A549 (cell line): ENCODE measurements at regions of chr3 and their contacts with region 1.

Region 1: DNA sequence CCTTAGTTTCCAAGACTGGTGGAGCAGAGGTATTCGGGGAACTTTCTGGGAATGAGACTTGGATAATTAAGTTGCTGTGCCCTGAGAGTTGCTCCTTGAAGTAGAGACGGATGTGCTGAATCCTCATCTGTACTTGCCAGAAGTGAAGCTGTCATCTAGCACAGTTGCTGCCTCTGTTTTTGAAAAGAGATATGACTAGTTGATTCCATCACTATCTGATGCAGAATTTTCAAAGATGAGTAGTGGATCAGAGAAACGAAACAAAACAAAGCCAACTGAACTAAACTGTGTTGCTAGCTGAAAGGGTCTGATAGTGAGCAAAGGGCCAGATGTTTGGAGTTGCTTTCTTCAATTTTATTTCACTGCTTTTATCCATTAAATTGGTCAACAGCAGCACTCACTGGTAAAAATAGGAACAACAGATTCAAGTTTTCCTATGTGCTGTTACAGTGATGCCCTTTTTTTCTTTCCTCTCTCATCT is 52.7 kb downstream of the MITF start:
- DNase-seq: peak in 1 of 2 experiments; percentile 46
- ATAC-seq: peak; percentile 82 to 85; a peak in 5 of 6 replicates
- H3K4me3 ChIP-seq: no peak overlapping the region
- H3K27ac ChIP-seq: peak overlapping the region in 1 of 2 experiments; percentile 23; a peak in 4 of 6 replicates
- H3K4me1 ChIP-seq: peaks cover 31% of the 10 kb centered on the region
- CTCF ChIP-seq: peak; percentile 84
- EP300 ChIP-seq: no peak
- POLR2A ChIP-seq: no peak
- RAD21 ChIP-seq: peak; percentile 92 to 93

Region 2: DNA sequence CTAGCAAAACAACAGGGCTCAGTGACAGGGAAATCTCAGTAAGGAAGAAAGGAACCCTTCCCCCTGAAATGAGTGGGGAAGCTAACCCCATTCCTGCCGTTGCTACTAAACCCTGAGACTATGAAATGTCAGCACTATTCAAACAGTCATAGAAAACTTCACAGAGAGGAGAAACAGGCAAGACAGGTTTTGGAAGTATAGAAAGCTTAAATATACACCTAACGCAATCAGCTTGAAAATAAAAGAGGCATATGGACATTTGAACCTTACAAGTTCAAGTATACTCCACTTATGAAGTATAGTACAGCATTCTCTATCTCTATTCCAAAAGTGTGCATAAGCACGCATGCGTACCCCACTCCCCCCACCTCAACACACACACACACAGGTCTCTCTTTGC is 388.5 kb before region 1 on chr3:
- CTCF ChIA-PET with region 1: no interaction called
- POLR2A ChIA-PET with region 1: no interaction called
- DNase-seq: no peak
- ATAC-seq: no peak
- H3K4me3 ChIP-seq: no peak overlapping the region
- H3K27ac ChIP-seq: no peak overlapping the region
- H3K4me1 ChIP-seq: no peaks in the 10 kb centered on the region
- CTCF ChIP-seq: no peak
- EP300 ChIP-seq: no peak
- POLR2A ChIP-seq: no peak
- RAD21 ChIP-seq: no peak

Region 3: GRCh38 chr3:69579306-69580041 is 212.5 kb before region 1 on chr3:
- CTCF ChIA-PET with region 1: no interaction called
- POLR2A ChIA-PET with region 1: no interaction called
- DNase-seq: no peak
- ATAC-seq: no peak
- H3K4me3 ChIP-seq: no peak overlapping the region
- H3K27ac ChIP-seq: no peak overlapping the region
- H3K4me1 ChIP-seq: no peaks in the 10 kb centered on the region
- CTCF ChIP-seq: no peak
- EP300 ChIP-seq: no peak
- POLR2A ChIP-seq: no peak
- RAD21 ChIP-seq: no peak

Region 4: DNA sequence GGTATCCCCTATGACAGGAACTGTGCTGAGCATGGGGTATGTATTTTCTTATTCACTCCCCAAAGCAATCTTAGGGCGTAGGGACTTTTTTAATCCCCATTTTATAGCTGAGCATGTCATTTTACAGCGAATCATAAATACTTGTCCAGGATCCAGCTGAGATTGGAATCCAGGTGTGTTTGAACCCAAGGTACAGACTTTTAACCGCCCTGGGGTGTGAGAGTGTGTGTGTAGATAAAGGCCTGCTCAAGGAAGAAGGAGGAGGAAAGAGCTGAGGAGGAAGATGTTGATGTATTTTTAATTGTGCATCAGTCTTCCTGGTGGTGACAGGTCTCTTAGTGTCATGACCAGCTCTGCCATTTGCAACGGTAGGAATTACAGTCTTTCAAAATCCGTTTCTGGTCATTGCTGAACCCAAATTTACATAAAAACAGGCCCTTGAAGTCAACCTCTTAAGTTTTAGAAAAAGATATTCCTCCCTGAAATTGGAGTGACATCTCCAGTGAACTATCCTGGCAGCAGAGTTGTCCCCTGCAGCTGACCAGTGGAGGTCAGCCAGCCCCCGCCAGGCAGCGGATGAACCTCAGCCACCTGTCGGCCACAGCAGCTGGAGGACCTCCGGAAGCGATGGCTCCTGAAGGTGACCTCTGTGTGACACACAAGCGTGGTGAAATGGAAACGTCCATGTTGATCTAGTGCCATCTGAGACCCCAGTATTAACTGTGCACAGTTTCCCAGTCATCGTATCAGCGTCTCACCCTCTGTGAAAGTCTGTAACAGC is 145.5 kb before region 1 on chr3:
- CTCF ChIA-PET with region 1: no interaction called
- POLR2A ChIA-PET with region 1: no interaction called
- DNase-seq: no peak
- ATAC-seq: no peak
- H3K4me3 ChIP-seq: no peak overlapping the region
- H3K27ac ChIP-seq: no peak overlapping the region
- H3K4me1 ChIP-seq: peaks cover 21% of the 10 kb centered on the region
- CTCF ChIP-seq: no peak
- EP300 ChIP-seq: no peak
- POLR2A ChIP-seq: no peak
- RAD21 ChIP-seq: no peak

Region 5: GRCh38 chr3:69682878-69683806 is 108.8 kb before region 1 on chr3:
- CTCF ChIA-PET with region 1: interaction called, 226 read pairs
- POLR2A ChIA-PET with region 1: no interaction called
- DNase-seq: peak in 1 of 2 experiments; percentile 75
- ATAC-seq: peak in 1 of 2 experiments; percentile 88; a peak in 3 of 6 replicates
- H3K4me3 ChIP-seq: no peak overlapping the region
- H3K27ac ChIP-seq: no peak overlapping the region; a peak in 1 of 6 replicates
- H3K4me1 ChIP-seq: peaks cover 15% of the 10 kb centered on the region
- CTCF ChIP-seq: no peak
- EP300 ChIP-seq: no peak
- POLR2A ChIP-seq: no peak
- RAD21 ChIP-seq: no peak

Region 6: GRCh38 chr3:69739204-69740102 is 52.5 kb before region 1 on chr3 and contains the start of gene MITF:
- CTCF ChIA-PET with region 1: interaction called, 24 read pairs
- POLR2A ChIA-PET with region 1: no interaction called
- DNase-seq: peak; percentile 84 to 89
- ATAC-seq: peak; percentile 97 to 99
- H3K4me3 ChIP-seq: peak within 1 kb of the TSS; percentile 85
- H3K27ac ChIP-seq: peak within 1 kb of the TSS; percentile 65 to 84
- H3K4me1 ChIP-seq: peaks cover 6% of the 10 kb centered on the region; the same call in 2 of the 3 replicates
- CTCF ChIP-seq: no peak
- EP300 ChIP-seq: no peak
- POLR2A ChIP-seq: peak; percentile 24
- RAD21 ChIP-seq: no peak
- polyA plus RNA-seq, gene MITF: 15.3 and 15.9 TPM in 2 replicates

Region 7: DNA sequence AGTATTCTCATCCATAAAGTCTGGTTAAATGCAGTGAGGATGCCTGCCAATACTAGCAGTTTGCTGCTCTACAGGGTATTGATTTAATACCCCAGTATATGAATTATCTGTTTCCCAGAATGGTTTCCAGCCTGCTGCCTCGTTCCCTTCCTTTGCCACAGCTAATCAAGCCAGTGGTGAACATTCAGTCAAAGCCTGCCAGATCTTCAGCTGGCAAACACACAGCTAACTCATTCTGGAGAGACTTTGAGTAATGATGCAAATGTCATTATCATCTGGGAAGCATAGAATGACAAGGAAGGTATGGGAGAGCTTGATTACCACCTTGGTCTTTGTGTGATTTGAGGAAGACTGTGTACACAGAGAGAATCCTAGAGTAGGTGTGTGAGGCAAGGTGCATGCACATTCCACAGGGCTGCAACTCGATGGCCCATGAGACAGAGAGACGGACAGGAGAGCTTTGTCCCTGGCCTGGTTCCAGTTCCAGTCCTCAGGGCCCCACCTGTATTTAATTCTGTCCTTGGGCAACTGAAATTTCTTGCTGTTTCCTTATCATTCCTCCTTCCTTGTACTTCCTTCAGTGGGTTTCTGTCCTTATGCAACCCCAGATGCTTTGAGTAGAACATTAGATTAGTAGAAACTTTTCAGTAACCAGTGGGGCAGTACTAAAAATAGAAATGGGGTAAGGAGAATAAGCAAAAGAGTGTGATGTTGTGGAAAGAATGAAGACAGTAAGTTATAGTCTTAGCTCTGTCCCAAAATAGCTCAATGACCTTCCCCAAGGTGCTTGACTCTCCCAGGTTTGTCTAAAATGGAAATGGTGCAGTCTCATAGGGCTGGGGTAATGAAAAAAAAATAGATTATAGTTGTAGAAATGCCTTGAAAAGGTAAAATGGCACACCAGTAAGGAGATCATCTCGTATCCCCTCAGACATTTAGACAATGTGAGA is 19.8 kb after region 1 on chr3:
- CTCF ChIA-PET with region 1: interaction called, 10 read pairs
- POLR2A ChIA-PET with region 1: no interaction called
- DNase-seq: no peak
- ATAC-seq: no peak
- H3K4me3 ChIP-seq: no peak overlapping the region
- H3K27ac ChIP-seq: no peak overlapping the region
- H3K4me1 ChIP-seq: no peaks in the 10 kb centered on the region
- CTCF ChIP-seq: no peak
- EP300 ChIP-seq: no peak
- POLR2A ChIP-seq: no peak
- RAD21 ChIP-seq: no peak

Region 8: GRCh38 chr3:69948246-69948862 is 156.4 kb after region 1 on chr3:
- CTCF ChIA-PET with region 1: interaction called, 15 read pairs
- POLR2A ChIA-PET with region 1: no interaction called
- DNase-seq: peak in 1 of 2 experiments; percentile 43
- ATAC-seq: no peak
- H3K4me3 ChIP-seq: no peak overlapping the region
- H3K27ac ChIP-seq: peak overlapping the region; percentile 19 to 49; a peak in 3 of 6 replicates
- H3K4me1 ChIP-seq: peaks cover 12% of the 10 kb centered on the region; the same call in 2 of the 3 replicates
- CTCF ChIP-seq: peak; percentile 89
- EP300 ChIP-seq: no peak
- POLR2A ChIP-seq: no peak
- RAD21 ChIP-seq: peak; percentile 79 to 89